ENCODE measurements at regions of chr6 and their contacts with region 1.

Region 1: GRCh38 chr6:129598244-129599187 is 111.5 kb downstream of the ARHGAP18 start:
- DNase-seq: peak; percentile 86
- H3K4me3 ChIP-seq: no peak overlapping the region
- H3K27ac ChIP-seq: no peak overlapping the region
- H3K4me1 ChIP-seq: peaks cover 18% of the 10 kb centered on the region
- H3K27me3 ChIP-seq: no peaks in the 10 kb centered on the region
- CTCF ChIP-seq: peak; percentile 94

Region 2: GRCh38 chr6:128397996-128398395 is 1200.5 kb before region 1 on chr6:
- CTCF ChIA-PET with region 1: no interaction called
- POLR2A ChIA-PET with region 1: no interaction called
- intact Hi-C with region 1: no loop called
- DNase-seq: no peak
- H3K4me3 ChIP-seq: no peak overlapping the region
- H3K27ac ChIP-seq: no peak overlapping the region
- H3K4me1 ChIP-seq: no peaks in the 10 kb centered on the region
- H3K27me3 ChIP-seq: no peaks in the 10 kb centered on the region
- CTCF ChIP-seq: no peak

Region 3: DNA sequence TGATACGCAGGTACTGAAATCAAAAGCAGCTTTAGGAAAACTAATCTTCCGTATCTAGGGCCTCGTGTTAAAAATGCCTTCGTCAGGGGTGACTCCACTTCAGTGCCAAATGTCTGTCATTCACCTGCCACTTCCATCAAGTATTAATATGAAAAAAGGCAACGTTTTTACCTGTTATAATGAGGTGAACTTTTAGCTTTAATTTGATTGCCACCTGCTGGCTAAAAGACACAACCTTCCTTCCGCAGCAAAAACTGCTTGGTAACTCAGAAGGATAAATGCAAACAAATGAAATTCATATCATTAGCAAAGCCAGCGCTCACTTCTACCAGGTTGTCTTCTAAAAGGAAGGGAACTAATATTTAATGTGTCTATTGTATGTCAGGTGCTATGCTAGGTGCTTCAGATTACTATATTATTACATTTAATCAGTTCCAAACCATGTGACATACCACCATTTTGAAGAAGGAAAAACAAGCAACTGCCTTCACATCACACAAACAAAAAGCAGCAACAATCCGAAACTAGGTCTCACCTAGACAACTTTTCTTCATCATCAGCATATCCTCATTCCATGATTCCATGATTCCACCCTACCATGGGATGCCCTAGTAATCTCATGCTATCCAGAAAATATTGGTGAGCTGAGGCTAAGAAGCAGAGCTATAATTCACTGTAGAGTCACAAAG is 132.1 kb after region 1 on chr6:
- CTCF ChIA-PET with region 1: no interaction called
- POLR2A ChIA-PET with region 1: interaction called, 4 read pairs
- intact Hi-C with region 1: loop called (anchors 1 kb)
- DNase-seq: peak; percentile 35
- H3K4me3 ChIP-seq: no peak overlapping the region
- H3K27ac ChIP-seq: no peak overlapping the region
- H3K4me1 ChIP-seq: no peaks in the 10 kb centered on the region
- H3K27me3 ChIP-seq: no peaks in the 10 kb centered on the region
- CTCF ChIP-seq: peak; percentile 58

Region 4: GRCh38 chr6:129774697-129775447 is 176.4 kb after region 1 on chr6:
- CTCF ChIA-PET with region 1: interaction called, 11 read pairs
- POLR2A ChIA-PET with region 1: no interaction called
- intact Hi-C with region 1: loop called (anchors 2 kb)
- DNase-seq: peak; percentile 90
- H3K4me3 ChIP-seq: peak overlapping the region; percentile 20
- H3K27ac ChIP-seq: no peak overlapping the region
- H3K4me1 ChIP-seq: no peaks in the 10 kb centered on the region
- H3K27me3 ChIP-seq: no peaks in the 10 kb centered on the region
- CTCF ChIP-seq: peak; percentile 98

Region 5: GRCh38 chr6:129893640-129894039 is 295.1 kb after region 1 on chr6:
- CTCF ChIA-PET with region 1: no interaction called
- POLR2A ChIA-PET with region 1: no interaction called
- intact Hi-C with region 1: loop called (anchors 5 kb)
- DNase-seq: peak; percentile 70
- H3K4me3 ChIP-seq: no peak overlapping the region
- H3K27ac ChIP-seq: peak overlapping the region; percentile 48
- H3K4me1 ChIP-seq: peaks cover 47% of the 10 kb centered on the region
- H3K27me3 ChIP-seq: no peaks in the 10 kb centered on the region
- CTCF ChIP-seq: peak; percentile 71

Region 6: DNA sequence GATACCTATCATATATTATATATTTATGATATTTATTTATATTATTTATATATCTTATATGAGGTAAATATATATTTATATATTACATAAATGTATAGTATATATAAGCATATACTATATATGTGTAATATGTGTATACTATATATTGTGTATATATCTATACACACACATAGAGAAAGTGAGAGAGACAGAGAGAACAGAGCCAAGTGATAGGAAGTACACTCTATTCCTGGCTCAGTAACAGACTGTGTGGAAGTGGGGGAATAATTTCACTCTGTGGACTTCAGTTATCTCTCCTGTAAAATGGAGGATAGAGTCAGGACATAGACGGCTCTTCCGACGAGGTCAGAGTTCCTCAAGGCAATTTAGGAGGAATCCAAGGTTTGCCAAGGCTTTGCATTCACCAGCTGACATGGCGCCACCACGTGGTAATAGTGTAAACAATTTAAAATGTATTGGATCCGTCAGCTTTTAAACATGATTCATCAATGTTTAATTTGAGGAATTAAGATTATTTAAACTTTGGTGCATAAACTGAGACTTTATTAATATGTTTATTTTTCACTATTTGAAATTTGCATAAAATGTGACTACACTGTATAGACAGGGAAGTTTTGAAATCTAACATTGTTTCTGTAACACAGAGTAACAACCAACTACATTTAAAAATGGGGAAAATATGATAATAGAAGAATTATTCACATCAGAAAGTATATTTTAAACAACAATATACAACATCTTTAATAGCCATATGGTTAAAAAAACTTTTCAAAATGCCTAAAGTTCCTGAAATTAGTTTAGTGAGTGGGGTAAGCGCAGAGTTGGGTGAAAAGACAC is 338.0 kb after region 1 on chr6:
- CTCF ChIA-PET with region 1: interaction called, 4 read pairs
- POLR2A ChIA-PET with region 1: no interaction called
- intact Hi-C with region 1: loop called (anchors 5 kb)
- DNase-seq: peak; percentile 90
- H3K4me3 ChIP-seq: no peak overlapping the region
- H3K27ac ChIP-seq: no peak overlapping the region
- H3K4me1 ChIP-seq: peaks cover 3% of the 10 kb centered on the region
- H3K27me3 ChIP-seq: no peaks in the 10 kb centered on the region
- CTCF ChIP-seq: peak; percentile 87

Region 7: DNA sequence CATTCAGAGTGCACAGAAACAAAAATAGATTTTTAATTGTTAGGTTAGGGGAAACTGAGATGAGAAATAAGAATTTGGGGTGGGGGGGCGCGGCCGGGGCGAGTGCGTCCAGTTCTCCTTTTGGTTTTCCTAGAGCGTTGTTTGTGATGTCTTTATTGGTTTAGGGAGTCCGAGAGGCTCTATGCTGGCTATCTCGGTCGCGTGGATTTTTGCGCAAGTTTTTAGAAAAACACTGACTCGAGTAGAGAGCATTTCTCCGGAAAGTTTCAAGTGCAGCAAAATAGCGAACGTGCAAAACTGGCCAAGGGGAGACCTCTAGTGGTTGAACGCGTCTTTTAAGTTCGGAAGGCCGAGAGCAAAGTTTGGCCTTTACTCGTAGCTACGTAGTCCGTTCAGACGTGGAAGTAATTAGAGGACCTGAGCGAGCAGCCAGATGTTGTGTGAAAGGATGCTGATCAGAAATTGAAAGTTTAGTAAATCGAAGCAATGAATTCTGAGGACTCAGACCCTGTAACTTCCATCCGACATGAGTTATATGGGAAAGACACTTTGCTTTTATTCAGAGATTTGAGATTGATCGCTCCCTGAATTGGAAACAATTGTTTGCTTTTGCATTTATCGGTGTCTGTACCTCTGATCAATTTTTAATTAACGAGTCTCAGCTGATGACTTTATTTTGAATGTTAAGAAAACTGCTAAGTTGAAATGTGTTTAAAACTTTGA is 422.6 kb after region 1 on chr6:
- CTCF ChIA-PET with region 1: interaction called, 6 read pairs
- POLR2A ChIA-PET with region 1: no interaction called
- intact Hi-C with region 1: loop called (anchors 1 kb)
- DNase-seq: peak; percentile 93
- H3K4me3 ChIP-seq: peak overlapping the region; percentile 72
- H3K27ac ChIP-seq: peak overlapping the region; percentile 71
- H3K4me1 ChIP-seq: peaks cover 13% of the 10 kb centered on the region
- H3K27me3 ChIP-seq: no peaks in the 10 kb centered on the region
- CTCF ChIP-seq: peak; percentile 89